Heart right ventricle (tissue), 16 donors: ENCODE measurements at regions of chr1 and their contacts with region 1.

Region 1: GRCh38 chr1:39566441-39567137 is 10.0 kb downstream of the PABPC4 start:
- DNase-seq: no peak
- ATAC-seq: no peak
- H3K4me3 ChIP-seq: no peak overlapping the region
- H3K27ac ChIP-seq: no peak overlapping the region
- H3K4me1 ChIP-seq: peaks cover 0 to 27% (median 0%) of the 10 kb centered on the region in 9 donors
- H3K27me3 ChIP-seq: no peaks in the 10 kb centered on the region
- CTCF ChIP-seq: no peak

Region 2: GRCh38 chr1:39326832-39327231 is 239.8 kb before region 1 on chr1:
- intact Hi-C with region 1: loop called in 1 of 10 experiments (anchors 10 kb)
- DNase-seq: no peak
- ATAC-seq: no peak
- H3K4me3 ChIP-seq: no peak overlapping the region
- H3K27ac ChIP-seq: no peak overlapping the region
- H3K4me1 ChIP-seq: peaks cover 0 to 2% (median 0%) of the 10 kb centered on the region in 9 donors
- H3K27me3 ChIP-seq: no peaks in the 10 kb centered on the region
- CTCF ChIP-seq: no peak